ENCODE measurements at regions of chr18 and their contacts with region 1.

Region 1: DNA sequence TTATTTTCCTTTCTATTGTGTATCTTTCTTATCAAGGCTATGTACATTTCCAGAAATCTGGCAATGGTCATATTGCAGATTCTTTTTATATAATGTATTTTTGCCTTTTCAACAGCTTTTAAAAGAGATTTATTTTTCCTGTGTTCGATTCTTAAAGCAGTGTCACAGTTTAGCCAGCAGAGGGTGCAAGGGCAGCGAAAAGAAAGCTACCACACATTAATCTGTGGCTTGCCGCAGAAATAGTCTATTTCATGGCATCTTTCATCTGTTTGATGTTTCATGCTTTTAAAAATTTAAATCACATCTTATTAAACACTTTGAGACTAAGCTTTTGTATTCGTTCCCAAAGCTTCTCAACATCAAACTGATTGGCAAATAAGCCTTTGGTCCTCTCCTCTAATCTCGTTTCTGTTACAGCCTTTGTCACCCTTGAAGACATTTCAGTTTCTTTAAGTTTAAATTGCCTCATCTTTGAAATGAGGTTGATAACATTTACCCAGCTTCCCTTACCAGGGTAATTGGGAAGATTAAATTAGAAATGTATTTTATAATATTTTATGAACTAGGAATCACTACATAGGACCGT is 73.3 kb downstream of the PIK3C3 start:
- DNase-seq: peak in 12 of 14 experiments; percentile 0 to 55 (median 7)
- ATAC-seq: peak; percentile 73
- H3K4me3 ChIP-seq: no peak overlapping the region
- H3K4me3 Mint-ChIP-seq: no peak overlapping the region
- H3K27ac ChIP-seq: no peak overlapping the region
- H3K27ac Mint-ChIP-seq: no peak overlapping the region
- H3K4me1 ChIP-seq: no peaks in the 10 kb centered on the region
- H3K4me1 Mint-ChIP-seq: peaks cover 33% of the 10 kb centered on the region
- H3K27me3 ChIP-seq: no peaks in the 10 kb centered on the region
- H3K27me3 Mint-ChIP-seq: no peaks in the 10 kb centered on the region
- CTCF ChIP-seq: peak; percentile 86

Region 2: GRCh38 chr18:42038936-42039335 is 10.6 kb after region 1 on chr18:
- CTCF ChIA-PET with region 1: interaction called, 12 read pairs
- POLR2A ChIA-PET with region 1: interaction called, 3 read pairs
- intact Hi-C with region 1: no loop called
- DNase-seq: no peak
- ATAC-seq: no peak
- H3K4me3 ChIP-seq: no peak overlapping the region
- H3K4me3 Mint-ChIP-seq: no peak overlapping the region
- H3K27ac ChIP-seq: no peak overlapping the region
- H3K27ac Mint-ChIP-seq: no peak overlapping the region
- H3K4me1 ChIP-seq: no peaks in the 10 kb centered on the region
- H3K4me1 Mint-ChIP-seq: no peaks in the 10 kb centered on the region
- H3K27me3 ChIP-seq: no peaks in the 10 kb centered on the region
- H3K27me3 Mint-ChIP-seq: no peaks in the 10 kb centered on the region
- CTCF ChIP-seq: no peak

Region 3: GRCh38 chr18:42053188-42053781 is 24.9 kb after region 1 on chr18:
- CTCF ChIA-PET with region 1: interaction called, 12 read pairs
- POLR2A ChIA-PET with region 1: interaction called, 7 read pairs
- intact Hi-C with region 1: no loop called
- DNase-seq: peak; percentile 26 to 77 (median 52)
- ATAC-seq: peak; percentile 73
- H3K4me3 ChIP-seq: no peak overlapping the region
- H3K4me3 Mint-ChIP-seq: no peak overlapping the region
- H3K27ac ChIP-seq: no peak overlapping the region
- H3K27ac Mint-ChIP-seq: no peak overlapping the region
- H3K4me1 ChIP-seq: no peaks in the 10 kb centered on the region
- H3K4me1 Mint-ChIP-seq: peaks cover 15% of the 10 kb centered on the region
- H3K27me3 ChIP-seq: no peaks in the 10 kb centered on the region
- H3K27me3 Mint-ChIP-seq: no peaks in the 10 kb centered on the region
- CTCF ChIP-seq: peak; percentile 98

Region 4: DNA sequence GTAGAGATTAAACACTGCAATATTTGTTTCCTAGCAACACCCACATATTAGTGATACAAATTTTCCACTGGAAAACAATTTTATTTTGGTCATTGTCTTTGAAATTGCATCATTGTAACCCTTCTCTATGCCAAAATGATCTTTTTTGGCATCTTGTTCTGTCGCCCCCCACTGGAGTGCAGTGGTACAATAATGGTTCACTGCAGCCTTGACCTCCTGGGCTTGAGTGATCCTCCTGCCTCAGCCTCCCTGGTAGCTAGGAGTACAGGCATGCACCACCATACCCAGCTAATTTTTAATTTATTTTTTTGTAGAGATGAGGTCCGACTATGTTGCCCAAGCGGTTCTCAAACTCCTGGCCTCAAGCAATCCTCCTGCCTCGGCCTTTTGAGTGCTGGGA is 44.1 kb after region 1 on chr18:
- CTCF ChIA-PET with region 1: no interaction called
- POLR2A ChIA-PET with region 1: no interaction called
- intact Hi-C with region 1: no loop called
- DNase-seq: no peak
- ATAC-seq: no peak
- H3K4me3 ChIP-seq: no peak overlapping the region
- H3K4me3 Mint-ChIP-seq: no peak overlapping the region
- H3K27ac ChIP-seq: no peak overlapping the region
- H3K27ac Mint-ChIP-seq: no peak overlapping the region
- H3K4me1 ChIP-seq: no peaks in the 10 kb centered on the region
- H3K4me1 Mint-ChIP-seq: peaks cover 5% of the 10 kb centered on the region
- H3K27me3 ChIP-seq: no peaks in the 10 kb centered on the region
- H3K27me3 Mint-ChIP-seq: no peaks in the 10 kb centered on the region
- CTCF ChIP-seq: no peak

Region 5: GRCh38 chr18:42086288-42086687 is 57.9 kb after region 1 on chr18:
- CTCF ChIA-PET with region 1: no interaction called
- POLR2A ChIA-PET with region 1: no interaction called
- intact Hi-C with region 1: no loop called
- DNase-seq: no peak
- ATAC-seq: no peak
- H3K4me3 ChIP-seq: no peak overlapping the region
- H3K4me3 Mint-ChIP-seq: no peak overlapping the region
- H3K27ac ChIP-seq: no peak overlapping the region
- H3K27ac Mint-ChIP-seq: no peak overlapping the region
- H3K4me1 ChIP-seq: no peaks in the 10 kb centered on the region
- H3K4me1 Mint-ChIP-seq: no peaks in the 10 kb centered on the region
- H3K27me3 ChIP-seq: no peaks in the 10 kb centered on the region
- H3K27me3 Mint-ChIP-seq: no peaks in the 10 kb centered on the region
- CTCF ChIP-seq: no peak

Measured in CD4-positive, alpha-beta T cell (primary cell).